ENCODE measurements at regions of chr11 and their contacts with region 1.

Region 1: DNA sequence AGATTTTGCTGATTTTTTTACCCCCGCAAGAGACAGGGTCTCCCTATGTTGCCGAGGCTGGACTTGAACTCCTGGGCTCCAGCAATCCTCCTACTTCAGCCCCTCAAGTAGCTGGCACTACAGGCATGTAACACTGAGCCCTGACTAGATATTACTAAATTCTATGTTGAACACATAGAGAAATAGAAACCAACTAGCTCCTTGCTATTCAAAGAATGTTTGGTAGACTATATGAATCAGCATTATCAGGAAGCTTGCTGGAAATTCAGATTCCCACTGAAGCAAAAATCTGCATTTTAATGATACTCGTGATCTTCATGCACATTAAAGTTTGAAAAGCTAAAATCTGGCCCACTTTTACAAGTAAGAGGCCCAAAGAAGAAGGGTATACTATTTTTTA is 11.9 kb downstream of the TMEM41B start:
- DNase-seq: no peak
- H3K4me3 ChIP-seq: no peak overlapping the region
- H3K27ac ChIP-seq: no peak overlapping the region
- H3K4me1 ChIP-seq: no peaks in the 10 kb centered on the region
- H3K27me3 ChIP-seq: no peaks in the 10 kb centered on the region
- CTCF ChIP-seq: no peak

Region 2: DNA sequence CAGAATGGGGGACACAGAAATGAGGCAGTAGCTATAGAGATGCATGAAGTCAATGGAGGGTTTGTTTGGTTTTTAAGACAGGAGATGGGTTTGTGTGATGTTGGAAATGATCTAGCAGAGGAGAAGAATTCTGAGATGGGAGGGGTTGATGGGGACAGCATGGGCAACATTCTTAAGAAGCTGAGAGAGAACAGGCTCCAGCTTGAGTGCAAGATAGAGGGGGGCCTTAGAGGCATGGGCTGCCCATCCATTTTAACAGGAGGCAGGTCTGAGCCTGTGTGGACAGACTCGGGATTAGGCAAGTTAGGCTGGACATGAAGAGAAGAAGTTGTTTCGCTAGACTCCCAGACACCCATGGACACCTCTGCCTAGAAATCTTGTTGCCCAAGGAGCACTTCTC is 260.7 kb before region 1 on chr11:
- CTCF ChIA-PET with region 1: no interaction called
- POLR2A ChIA-PET with region 1: interaction called, 23 read pairs
- intact Hi-C with region 1: no loop called
- DNase-seq: no peak
- H3K4me3 ChIP-seq: no peak overlapping the region
- H3K27ac ChIP-seq: no peak overlapping the region
- H3K4me1 ChIP-seq: peaks cover 10% of the 10 kb centered on the region; the same call in 1 of the 2 replicates
- H3K27me3 ChIP-seq: no peaks in the 10 kb centered on the region
- CTCF ChIP-seq: no peak

Region 3: GRCh38 chr11:9176550-9176949 is 125.9 kb before region 1 on chr11:
- CTCF ChIA-PET with region 1: no interaction called
- POLR2A ChIA-PET with region 1: interaction called, 10 read pairs
- intact Hi-C with region 1: no loop called
- DNase-seq: no peak
- H3K4me3 ChIP-seq: no peak overlapping the region
- H3K27ac ChIP-seq: no peak overlapping the region
- H3K4me1 ChIP-seq: no peaks in the 10 kb centered on the region
- H3K27me3 ChIP-seq: no peaks in the 10 kb centered on the region
- CTCF ChIP-seq: no peak